AG04449 (cell line): ENCODE measurements at regions of chr20 and their contacts with region 1.

Region 1: GRCh38 chr20:1313236-1313964 is 15.5 kb downstream of the SDCBP2 start:
- DNase-seq: no peak
- H3K4me3 ChIP-seq: peak overlapping the region; percentile 53
- CTCF ChIP-seq: peak; percentile 92

Region 2: GRCh38 chr20:1299522-1299921 is 13.9 kb before region 1 on chr20:
- CTCF ChIA-PET with region 1: interaction called, 14 read pairs
- POLR2A ChIA-PET with region 1: no interaction called
- DNase-seq: no peak
- H3K4me3 ChIP-seq: no peak overlapping the region
- CTCF ChIP-seq: no peak

Region 3: GRCh38 chr20:1325173-1326030 is 12.0 kb after region 1 on chr20:
- CTCF ChIA-PET with region 1: interaction called, 23 read pairs
- POLR2A ChIA-PET with region 1: no interaction called
- DNase-seq: peak; percentile 68
- H3K4me3 ChIP-seq: peak overlapping the region; percentile 90
- CTCF ChIP-seq: peak; percentile 39

Region 4: DNA sequence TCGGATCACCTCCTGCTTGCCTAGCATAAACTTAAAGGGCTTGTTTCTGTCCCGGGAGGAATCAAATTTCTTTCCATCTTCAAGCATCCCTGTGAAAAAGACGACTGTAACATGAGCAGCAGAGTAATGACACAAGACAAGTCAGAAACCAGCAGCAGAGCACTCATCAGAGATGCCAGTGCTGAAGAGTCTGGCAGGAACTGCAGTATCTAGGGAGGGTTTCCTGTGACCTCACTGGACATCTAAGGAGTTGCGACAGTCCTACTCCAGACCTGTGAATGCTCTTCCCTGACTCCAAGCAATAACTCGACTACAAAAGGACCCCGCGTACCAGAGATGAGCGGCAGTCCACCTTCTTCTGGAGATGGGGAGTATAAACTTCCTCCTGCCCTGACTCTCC is 62.1 kb after region 1 on chr20:
- CTCF ChIA-PET with region 1: no interaction called
- POLR2A ChIA-PET with region 1: no interaction called
- DNase-seq: peak; percentile 45
- H3K4me3 ChIP-seq: no peak overlapping the region
- CTCF ChIP-seq: no peak